ENCODE measurements at regions of chr1 and their contacts with region 1.

Region 1: GRCh38 chr1:64268653-64269557 is 65.5 kb downstream of the UBE2U start:
- DNase-seq: peak in 41 of 42 donors; percentile 6 to 92 (median 77)

Region 2: DNA sequence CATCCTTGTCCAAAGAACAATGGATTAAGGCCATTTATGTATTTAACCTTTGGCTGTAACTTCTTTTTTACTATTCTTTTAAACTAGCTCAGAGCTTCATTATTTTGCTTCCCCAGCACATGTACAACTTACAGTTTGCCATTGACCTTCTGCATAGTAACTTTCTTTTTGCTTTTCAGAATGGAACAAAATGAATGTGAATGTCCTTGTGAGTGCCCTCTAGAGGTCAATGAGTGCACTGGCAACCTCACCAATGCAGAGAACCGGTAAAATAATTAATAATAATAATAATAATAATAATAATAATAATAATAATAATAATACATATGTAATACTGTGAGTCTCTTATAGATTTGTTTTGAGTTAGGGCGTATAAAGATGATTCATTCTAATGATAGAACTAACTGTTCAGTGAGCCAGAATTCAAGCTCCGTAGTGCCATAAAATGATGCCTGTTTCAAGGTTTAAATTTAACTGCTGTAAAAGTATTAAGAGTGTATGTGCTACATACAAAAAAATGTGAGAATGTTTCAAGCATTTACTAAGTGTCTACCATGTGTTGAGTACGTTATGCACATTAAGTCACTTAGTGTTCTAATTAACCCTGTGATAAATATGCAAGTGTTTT is 406.9 kb after region 1 on chr1:
- intact Hi-C with region 1: loop called (anchors 10 kb)
- DNase-seq: peak in 1 of 42 donors; percentile 20